WTC11 (cell line): ENCODE measurements at regions of chr6 and their contacts with region 1.

Region 1: DNA sequence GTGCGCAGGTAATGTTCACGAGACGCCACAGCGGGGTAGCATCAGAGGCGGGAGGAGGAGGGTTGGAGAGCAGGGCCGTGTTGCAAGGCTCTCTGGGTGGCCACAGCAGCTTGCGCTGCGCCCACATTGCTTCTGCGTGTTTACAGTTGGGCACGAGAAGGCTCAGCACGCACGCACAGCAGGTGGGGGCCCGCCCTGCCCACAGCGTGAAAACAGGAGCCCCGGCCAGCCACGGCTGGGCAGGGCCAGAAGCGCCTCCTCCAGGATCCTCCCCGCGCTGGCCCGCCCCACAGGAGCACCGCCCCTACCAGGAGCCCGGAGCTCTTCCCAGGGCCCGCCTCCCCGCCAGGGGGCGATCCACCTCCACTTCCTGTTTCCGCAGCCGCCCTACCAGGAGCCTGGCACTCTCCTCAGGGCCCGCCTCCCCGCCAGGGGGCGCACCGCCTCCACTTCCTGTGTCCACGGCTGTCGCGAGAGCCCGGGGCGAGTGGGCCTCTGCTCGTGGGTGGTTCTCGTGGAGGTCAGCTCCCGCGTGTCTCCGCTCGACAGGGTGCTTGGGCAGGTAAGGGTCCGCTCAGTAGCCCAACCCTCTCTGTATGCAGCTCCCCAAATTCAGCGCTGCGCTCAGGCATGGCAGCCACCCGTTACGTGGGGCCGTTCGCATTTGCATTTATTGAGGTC is at the start of gene FAM50B:
- DNase-seq: peak; percentile 98
- ATAC-seq: peak; percentile 98
- H3K4me3 Mint-ChIP-seq: peak within 1 kb of the TSS; percentile 80
- H3K27ac Mint-ChIP-seq: no peak within 1 kb of the TSS
- H3K4me1 Mint-ChIP-seq: peaks cover 9% of the 10 kb centered on the region
- H3K27me3 Mint-ChIP-seq: peaks cover 6% of the 10 kb centered on the region
- CTCF ChIP-seq: peak; percentile 100
- total RNA-seq, gene FAM50B: 2.1 to 3.6 TPM (median 3.3 TPM) in 3 replicates

Region 2: GRCh38 chr6:3603340-3604130 is 245.5 kb before region 1 on chr6:
- CTCF ChIA-PET with region 1: no interaction called
- POLR2A ChIA-PET with region 1: no interaction called
- DNase-seq: no peak
- ATAC-seq: no peak
- H3K4me3 Mint-ChIP-seq: no peak overlapping the region
- H3K27ac Mint-ChIP-seq: no peak overlapping the region
- H3K4me1 Mint-ChIP-seq: no peaks in the 10 kb centered on the region
- H3K27me3 Mint-ChIP-seq: peaks cover 7% of the 10 kb centered on the region; the same call in 1 of the 2 replicates
- CTCF ChIP-seq: no peak

Region 3: DNA sequence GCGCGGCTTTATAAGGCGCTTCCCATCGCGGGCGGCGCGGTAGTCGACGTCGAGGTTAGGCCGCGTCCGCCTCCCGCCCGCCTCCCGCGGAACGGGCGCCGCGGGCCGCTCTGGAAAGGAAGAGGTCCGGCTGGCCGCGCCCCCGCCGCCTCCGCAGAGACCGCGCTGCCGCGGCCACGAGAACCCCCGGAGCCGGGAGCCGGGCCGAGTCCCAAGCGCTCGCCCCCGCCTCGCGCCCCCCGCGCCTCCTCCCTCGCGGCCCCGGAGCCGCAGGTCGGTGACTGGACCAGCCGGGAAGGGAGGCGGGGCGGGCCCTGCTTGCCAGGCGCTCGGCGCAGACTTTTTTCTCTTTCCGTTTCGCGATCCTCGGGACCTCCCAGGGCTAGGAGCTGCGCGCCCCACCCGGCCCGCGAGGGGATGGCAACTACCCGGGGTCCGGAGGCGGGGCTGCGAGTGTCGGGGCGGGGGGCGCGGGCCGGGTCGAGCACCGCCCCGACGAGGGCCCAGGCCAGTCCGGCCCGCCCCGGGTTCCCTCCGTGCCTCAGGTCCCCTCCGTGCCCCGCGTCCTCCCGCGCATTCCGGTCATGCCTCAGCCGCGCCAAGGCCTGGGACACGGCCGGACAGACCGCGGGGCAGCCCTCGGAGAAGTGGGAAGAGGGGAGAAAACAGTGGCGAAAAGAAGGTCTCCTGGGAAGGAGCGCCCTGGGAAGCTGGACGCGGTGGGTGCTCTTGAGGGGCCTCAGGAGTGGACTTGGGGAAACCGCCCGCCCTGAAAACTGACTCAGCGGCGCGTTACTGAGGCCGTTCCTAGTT is 97.1 kb before region 1 on chr6:
- CTCF ChIA-PET with region 1: interaction called, 68 read pairs
- POLR2A ChIA-PET with region 1: no interaction called
- DNase-seq: peak; percentile 79
- ATAC-seq: peak; percentile 40
- H3K4me3 Mint-ChIP-seq: peak overlapping the region; percentile 62
- H3K27ac Mint-ChIP-seq: no peak overlapping the region
- H3K4me1 Mint-ChIP-seq: peaks cover 56% of the 10 kb centered on the region
- H3K27me3 Mint-ChIP-seq: peaks cover 57% of the 10 kb centered on the region
- CTCF ChIP-seq: no peak; the same call in 1 of the 2 replicates

Region 4: DNA sequence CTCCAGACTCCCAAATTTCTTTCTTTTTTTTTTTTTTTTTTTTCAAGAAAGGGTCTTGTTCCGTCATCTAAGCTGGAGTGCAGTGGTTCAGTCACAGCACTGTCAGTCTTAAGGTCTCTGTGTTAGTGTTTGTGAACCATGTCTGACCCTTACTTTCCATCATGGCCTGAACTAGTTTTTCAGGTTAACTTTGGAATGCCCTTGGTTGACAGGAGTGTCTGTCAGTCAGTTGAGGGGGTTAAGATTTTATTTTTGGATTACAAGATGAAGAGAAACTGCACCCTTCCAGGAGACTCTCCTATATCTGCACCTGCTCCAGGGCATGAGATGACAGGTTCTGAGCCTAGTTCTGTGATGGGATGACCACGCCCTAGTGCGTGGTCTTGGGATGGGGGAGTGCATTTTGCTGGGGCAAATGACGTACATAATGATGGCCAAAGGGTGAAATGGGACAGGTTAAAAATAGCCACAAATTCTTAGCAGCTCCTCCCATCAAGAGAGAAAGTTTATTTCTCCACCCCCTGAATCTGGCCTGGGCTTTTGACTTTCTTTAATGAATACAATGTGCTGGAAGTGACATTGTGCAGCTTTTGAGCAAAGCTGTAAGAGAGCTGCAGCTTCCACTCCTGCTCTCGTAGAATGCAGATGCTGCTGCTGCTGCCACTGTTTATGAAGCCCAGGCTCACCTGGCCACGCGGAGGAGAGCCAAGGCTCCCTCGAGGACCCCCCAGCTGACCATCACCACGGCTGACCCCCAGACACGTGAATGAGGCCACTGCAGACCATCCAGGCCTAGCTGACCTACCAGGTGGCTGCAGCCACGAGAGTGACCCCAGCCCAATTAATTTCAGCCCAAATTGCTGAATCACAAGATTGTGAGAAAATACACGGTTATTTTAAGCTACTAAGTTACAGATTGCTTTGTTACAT is 29.6 kb before region 1 on chr6:
- CTCF ChIA-PET with region 1: interaction called, 26 read pairs
- POLR2A ChIA-PET with region 1: interaction called, 3 read pairs
- DNase-seq: no peak
- ATAC-seq: no peak
- H3K4me3 Mint-ChIP-seq: no peak overlapping the region
- H3K27ac Mint-ChIP-seq: no peak overlapping the region
- H3K4me1 Mint-ChIP-seq: peaks cover 38% of the 10 kb centered on the region
- H3K27me3 Mint-ChIP-seq: peaks cover 16% of the 10 kb centered on the region; the same call in 1 of the 2 replicates
- CTCF ChIP-seq: no peak

Region 5: GRCh38 chr6:3887150-3887700 is 38.2 kb after region 1 on chr6:
- CTCF ChIA-PET with region 1: interaction called, 45 read pairs
- POLR2A ChIA-PET with region 1: no interaction called
- DNase-seq: no peak
- ATAC-seq: peak; percentile 51; the same call in 1 of the 2 replicates
- H3K4me3 Mint-ChIP-seq: no peak overlapping the region
- H3K27ac Mint-ChIP-seq: no peak overlapping the region
- H3K4me1 Mint-ChIP-seq: peaks cover 19% of the 10 kb centered on the region
- H3K27me3 Mint-ChIP-seq: no peaks in the 10 kb centered on the region; the same call in 1 of the 2 replicates
- CTCF ChIP-seq: no peak

Region 6: GRCh38 chr6:3929281-3929798 is 80.3 kb after region 1 on chr6:
- CTCF ChIA-PET with region 1: interaction called, 221 read pairs
- POLR2A ChIA-PET with region 1: no interaction called
- DNase-seq: no peak
- ATAC-seq: no peak
- H3K4me3 Mint-ChIP-seq: no peak overlapping the region
- H3K27ac Mint-ChIP-seq: no peak overlapping the region
- H3K4me1 Mint-ChIP-seq: peaks cover 17% of the 10 kb centered on the region
- H3K27me3 Mint-ChIP-seq: no peaks in the 10 kb centered on the region
- CTCF ChIP-seq: no peak

Region 7: DNA sequence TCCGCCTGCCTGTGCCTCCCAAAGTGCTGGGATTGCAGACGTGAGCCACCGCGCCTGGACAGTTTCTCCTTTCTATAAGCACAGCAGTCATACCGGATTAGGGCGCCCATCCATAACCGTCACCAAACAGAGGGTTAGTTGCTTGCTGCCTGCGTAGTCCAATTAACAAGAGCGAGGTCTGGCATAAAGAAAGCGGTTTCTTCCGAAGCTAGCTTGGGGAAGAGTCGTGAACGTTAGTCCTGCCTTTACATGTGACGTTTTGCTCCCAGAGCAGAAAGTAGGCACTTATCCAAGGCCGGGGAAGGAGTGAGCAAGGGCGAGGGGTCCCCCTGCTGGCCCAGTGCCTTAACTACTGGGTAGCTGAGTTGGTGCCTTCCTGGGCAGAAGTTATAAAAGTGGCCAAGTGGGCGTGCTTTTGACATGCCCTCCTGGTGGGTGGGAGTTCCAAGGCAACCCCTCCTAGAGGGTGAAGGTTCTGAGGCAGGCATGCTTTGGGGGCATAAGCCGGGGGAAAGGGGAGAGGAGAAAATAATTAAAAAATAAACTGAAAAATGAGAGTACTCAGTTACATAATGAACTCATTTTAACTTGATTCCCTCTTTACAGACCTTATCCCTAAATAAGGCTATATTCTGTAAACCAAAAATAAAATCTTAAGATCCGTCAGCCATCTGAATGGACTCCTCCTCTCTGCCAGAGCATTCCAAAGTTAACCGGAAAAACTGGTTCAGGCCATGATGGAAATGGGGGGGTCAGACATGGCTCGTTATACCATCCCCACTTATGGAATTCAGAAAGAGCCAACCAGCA is 141.8 kb after region 1 on chr6:
- CTCF ChIA-PET with region 1: interaction called, 83 read pairs
- POLR2A ChIA-PET with region 1: no interaction called
- DNase-seq: peak; percentile 90
- ATAC-seq: peak; percentile 94
- H3K4me3 Mint-ChIP-seq: peak overlapping the region; percentile 29
- H3K27ac Mint-ChIP-seq: peak overlapping the region; percentile 42
- H3K4me1 Mint-ChIP-seq: peaks cover 44% of the 10 kb centered on the region
- H3K27me3 Mint-ChIP-seq: no peaks in the 10 kb centered on the region
- CTCF ChIP-seq: peak; percentile 78

Region 8: DNA sequence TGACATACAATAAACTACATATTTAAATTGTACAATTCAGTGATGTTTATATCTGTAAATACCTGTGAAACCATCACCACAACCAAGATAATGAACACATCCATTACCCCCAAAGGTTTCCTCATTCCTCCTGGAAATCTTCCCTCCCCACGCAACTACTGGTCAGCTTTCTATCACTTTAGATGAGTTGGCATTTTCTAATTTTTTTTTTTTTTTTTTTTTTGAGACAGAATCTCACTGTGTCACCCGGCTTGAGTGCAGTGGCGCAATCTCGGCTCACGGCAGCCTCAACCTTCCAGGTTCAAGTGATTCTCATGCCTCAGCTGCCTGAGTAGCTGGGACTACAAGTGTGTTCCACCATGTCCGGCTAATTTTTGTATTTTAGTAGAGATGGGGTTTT is 318.1 kb after region 1 on chr6:
- CTCF ChIA-PET with region 1: no interaction called
- POLR2A ChIA-PET with region 1: no interaction called
- DNase-seq: no peak
- ATAC-seq: no peak
- H3K4me3 Mint-ChIP-seq: no peak overlapping the region
- H3K27ac Mint-ChIP-seq: no peak overlapping the region
- H3K4me1 Mint-ChIP-seq: peaks cover 23% of the 10 kb centered on the region
- H3K27me3 Mint-ChIP-seq: peaks cover 37% of the 10 kb centered on the region
- CTCF ChIP-seq: no peak